ENCODE measurements at regions of chr14 and their contacts with region 1.

Region 1: DNA sequence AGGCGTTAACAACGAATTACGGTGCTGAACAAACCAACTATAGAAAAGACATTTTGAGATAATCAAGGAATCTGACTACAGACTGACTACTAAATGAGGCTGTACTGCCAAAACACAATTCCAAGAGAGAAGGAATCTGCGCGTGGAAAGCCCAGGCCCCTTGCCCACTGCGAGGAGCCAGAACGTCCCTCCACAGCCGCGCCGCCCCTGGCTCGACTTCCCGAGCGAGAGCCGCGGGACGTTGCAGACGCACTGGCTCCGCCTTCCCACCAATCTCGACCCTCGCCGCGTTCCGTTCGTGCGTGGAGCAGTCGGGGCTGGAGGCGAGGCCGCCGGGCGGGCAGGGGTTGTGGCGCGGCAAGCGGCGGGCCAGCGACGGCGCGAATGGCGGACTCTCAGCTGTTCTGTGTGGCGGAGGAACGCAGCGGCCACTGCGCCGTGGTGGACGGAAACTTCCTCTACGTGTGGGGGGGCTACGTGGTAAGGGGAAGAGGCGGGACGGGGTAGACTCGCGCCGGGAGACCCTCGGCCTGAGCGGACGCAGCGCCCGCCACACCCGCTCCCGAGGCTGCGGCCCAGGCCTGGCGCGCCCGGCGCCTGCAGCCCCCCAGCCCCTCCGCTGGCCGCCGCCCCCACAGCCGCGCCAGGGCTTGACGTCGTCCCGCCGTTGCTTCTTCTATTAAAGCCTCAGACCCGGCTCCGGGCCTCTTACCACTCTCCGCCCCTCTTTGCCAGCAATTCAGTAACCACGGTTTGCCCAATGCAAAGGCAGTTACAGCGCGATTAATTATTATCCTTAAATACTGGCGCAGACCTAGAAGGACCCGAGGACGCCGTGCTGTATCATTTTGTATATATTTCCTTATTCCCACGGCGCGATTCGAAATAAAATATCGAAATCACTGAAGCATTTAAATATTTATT is at the start of gene KLHDC1:
- DNase-seq: peak; percentile 70 to 96 (median 92)

Region 2: DNA sequence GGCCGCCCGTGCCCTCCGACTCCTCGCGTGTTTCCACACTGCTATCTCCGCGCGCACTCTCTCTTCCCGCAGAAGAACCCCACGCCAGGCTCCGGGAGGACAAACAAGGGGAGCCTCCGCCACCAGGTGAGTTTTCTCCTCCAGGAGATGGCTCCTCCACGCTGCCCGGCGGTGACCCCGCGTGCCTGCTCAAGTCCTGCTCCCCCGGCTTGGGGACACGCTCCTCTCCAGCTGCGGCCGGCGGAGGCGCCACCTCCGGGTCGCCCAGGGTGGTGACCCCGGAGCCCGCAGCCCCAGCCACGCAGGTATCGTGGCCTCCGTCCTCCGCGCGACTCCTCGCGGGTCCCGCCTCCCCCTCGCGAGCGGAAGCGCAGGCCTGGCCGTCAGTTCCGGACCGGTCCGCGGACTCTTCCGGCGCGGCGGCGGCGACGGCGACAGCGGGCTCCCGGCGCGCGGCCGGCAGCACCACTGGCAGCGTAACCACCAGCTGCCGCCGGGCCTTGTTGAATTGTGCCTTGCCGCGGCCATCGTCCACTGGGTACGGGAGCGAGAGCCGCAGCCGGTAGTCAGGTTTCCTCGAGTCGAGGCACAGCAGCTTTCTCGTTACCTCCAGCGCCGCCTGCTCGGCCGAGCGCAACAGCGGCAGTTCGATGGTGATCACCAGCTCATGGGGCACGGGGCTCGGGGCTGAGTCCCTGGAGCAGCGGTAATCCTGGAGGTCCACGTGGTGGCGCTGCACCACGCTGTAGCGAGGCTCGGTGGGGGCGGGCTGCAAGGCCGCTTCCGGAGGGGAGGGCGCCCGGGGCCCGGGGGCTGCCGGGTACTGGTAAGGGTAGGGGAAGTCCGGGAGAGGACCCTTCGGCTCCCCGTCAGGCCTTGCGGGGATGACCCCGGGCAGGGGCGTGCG is 59.2 kb before region 1 on chr14:
- intact Hi-C with region 1: loop called (anchors 5 kb)
- DNase-seq: peak; percentile 84 to 98 (median 95)

Region 3: DNA sequence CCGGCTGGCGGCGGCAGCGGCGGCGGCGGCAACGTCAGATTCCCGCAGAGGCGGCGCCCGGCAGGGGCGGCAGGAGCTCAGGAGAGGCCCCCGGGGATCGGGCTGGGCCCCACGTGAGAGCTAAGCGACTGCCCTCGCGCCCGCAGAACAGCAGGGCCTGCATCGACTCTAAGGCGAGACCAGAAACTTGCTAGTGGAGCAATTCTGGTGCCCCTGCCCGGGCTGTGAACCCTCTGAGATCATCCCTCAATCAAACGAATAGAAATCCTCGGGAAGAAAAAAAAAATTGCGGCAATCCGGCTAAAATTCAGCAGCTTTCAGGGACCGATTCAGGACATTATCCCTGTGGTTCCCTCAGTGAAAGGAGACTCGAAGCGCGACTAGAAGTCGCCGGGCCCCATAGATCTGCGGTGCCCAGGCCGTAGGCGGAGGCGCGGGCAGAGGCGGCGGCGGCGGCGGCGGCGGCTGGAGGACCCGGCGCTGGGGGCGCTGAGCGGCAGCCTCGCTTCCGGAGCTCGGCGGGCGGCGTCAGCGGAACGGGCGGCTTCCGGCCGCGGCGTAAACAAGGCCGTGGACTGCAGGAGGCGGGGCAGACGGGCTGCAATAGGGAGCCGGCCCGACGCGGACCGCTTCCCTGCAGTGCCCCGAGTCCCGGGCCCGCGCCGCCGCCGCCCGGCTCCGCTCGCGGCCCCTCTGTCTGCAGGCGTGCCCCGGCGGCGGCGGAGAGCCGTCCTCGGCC is 74.7 kb after region 1 on chr14 and contains the start of gene KLHDC2:
- intact Hi-C with region 1: loop called (anchors 2 kb)
- DNase-seq: peak; percentile 59 to 95 (median 90)

Region 4: DNA sequence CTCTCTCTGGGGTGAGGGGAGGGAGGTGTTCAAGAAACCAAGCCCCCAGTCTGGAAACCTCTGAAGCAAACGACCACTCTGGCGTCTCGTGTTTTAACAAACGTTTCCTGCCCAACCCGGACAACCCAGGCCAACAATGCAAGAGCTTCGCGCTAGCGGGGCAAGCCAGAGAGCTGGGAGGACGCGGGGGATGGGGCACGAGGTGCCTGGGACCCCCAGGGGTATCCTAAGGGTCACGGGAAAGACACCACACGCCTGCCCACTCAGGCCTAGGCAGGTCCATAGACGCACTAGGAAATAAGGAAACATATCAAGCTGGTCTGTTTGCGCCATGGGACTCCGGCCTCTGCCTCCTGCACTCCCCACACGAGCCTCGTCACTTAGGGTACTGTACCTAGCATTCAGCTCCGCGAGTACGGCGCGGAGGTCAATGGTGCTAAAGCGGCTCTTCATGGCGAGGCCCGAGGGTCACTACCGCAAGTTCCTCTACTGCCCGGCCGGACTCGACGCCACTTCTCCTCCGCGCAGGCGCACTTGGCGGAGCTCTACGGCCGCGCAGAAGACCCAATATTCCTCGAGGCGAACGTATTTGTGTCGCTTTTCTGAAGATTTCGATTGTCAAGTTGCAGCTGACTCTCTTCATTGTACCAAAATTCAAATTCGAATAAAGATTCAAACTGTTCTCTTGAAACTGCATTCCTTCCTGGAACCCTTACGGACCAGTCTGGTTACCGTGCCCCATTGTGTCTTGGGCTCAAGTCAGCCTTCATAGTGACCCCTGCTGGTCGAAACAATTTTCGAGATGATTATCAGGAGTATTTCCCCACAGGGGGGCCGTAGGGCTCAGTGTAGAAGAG is 159.5 kb after region 1 on chr14 and contains the start of gene NEMF:
- intact Hi-C with region 1: loop called (anchors 10 kb)
- DNase-seq: peak; percentile 75 to 96 (median 90)

Measured in head of caudate nucleus (tissue), 42 donors.